Right ventricle myocardium inferior (tissue), 1 donor: ENCODE measurements at regions of chr5 and their contacts with region 1.

Region 1: DNA sequence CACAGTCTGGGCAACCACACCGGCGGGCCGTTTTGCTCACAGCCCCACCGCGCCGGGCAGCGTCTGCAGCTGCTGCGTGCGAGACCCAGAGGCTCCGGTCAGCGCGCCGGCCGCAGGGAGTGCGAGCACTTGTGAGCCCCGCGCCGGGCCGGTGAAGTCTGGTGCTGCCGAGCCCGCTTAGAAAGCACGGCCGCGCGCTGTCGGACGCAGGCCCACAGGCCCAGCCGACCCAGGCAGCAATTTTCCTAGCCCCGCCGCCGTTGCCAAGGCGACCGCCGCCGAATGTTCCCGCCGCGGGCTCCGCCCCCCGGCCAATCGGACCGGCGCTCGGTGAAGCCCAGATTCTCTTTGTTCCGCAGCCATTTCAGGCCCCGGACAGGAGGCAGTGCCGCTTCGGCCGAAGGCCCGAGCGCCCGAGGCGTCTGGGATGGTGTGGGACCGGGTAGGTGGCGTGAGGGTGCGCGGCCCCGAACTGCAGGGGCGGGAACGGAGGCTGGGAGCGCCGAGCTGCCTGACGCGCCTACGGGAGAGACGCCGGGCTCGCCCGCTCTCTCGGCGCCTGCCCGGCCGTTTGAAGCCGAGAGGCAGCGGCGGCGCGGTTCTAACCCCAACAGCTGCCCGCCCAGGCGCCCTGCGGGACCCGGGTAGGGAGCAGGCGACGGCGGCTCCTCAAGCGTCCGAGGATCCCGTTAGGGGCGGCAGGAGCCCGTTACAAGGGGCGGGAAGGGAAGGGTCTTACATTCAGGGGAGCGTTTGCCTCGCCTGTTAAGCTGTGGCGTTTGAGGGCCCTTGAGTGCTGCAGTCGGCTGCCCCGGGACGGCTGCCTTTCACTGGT is at the start of gene TNPO1:
- DNase-seq: peak; percentile 97
- ATAC-seq: peak; percentile 98
- total RNA-seq, gene TNPO1: 66.8 TPM

Region 2: DNA sequence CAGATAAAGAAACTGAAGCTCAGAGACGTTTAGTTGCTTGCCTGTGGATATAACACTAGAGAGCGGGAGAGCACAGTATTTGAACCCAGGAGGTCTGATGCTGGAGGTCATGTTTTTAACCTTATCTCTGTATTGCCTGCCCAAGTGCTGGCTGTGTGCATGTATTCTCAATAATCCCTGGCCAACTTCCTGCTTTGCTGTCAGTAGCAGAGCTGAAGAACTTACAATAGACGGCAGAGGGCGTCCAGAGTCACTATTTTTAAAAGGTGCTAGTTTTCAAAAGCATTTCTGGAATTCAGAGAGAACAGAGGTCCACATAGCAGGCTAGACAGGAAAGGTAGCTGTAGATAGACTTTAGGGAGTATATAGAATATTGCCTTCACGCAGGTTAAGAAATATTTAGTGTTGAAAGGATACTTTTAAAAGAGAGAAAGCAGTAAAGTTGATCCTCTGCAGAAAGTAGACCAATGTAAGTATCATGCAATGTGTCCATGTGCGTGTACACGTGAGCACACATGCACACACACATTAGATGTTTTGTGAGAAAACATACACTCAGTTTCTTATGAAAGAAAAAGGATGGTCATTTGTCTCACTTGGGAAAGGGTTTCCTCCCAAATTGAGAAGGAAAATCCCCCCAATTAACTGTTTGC is 450.1 kb before region 1 on chr5:
- intact Hi-C with region 1: loop called (anchors 2 kb)
- DNase-seq: no peak
- ATAC-seq: peak; percentile 90

Region 3: GRCh38 chr5:72611118-72611730 is 205.3 kb before region 1 on chr5:
- intact Hi-C with region 1: loop called (anchors 5 kb)
- DNase-seq: peak; percentile 81
- ATAC-seq: peak; percentile 96

Region 4: GRCh38 chr5:72847989-72848473 is 31.5 kb after region 1 on chr5:
- intact Hi-C with region 1: loop called (anchors 1 kb)
- DNase-seq: peak; percentile 95
- ATAC-seq: peak; percentile 97